ENCODE measurements at regions of chr1 and their contacts with region 1.

Region 1: GRCh38 chr1:17527036-17527914 is 12.2 kb upstream of the ARHGEF10L start:
- DNase-seq: peak; percentile 40
- H3K4me3 ChIP-seq: no peak overlapping the region
- H3K27ac ChIP-seq: peak overlapping the region; percentile 69 to 85 (median 84)
- H3K4me1 ChIP-seq: peaks cover 25 to 52% (median 39%) of the 10 kb centered on the region in 4 donors
- H3K27me3 ChIP-seq: no peaks in the 10 kb centered on the region
- CTCF ChIP-seq: no peak
- EP300 ChIP-seq: no peak
- POLR2A ChIP-seq: no peak

Region 2: DNA sequence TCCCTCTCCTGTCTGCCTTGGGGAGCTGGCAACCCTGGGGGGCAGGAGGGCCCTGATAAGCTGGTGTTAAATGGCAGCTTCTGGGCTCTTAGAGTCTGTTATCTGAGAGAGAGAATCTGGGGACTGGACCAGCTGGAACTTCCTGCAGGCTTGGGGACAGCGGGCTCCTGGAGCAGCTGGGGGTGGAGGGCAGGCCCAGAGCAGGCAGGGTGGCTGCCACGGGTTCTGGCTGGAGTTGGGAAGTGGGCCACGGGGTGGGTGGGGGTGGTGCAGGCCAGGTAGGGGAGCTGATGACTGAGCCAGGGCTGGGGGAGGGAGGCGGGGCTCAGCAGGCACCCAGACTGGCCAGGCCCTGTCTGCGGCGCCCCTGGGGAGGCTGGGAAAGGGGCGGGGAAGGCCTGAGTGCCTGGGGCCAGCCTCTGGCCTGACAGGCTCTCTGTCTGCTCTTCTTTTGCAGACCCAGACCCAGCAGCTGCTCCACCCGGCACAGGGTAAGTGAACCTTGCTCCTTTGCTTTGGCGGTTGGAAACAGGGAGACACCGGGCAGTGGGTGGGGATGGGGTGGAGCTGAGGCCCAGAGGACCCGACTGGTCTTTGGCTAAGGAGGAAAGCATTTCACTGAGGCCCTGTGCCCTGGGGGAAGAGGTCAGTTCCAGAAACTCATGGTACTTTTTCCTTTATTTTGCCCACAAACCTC is 60.9 kb after region 1 on chr1:
- in situ Hi-C with region 1: no loop called
- intact Hi-C with region 1: loop called (anchors 5 kb)
- DNase-seq: peak; percentile 91
- H3K4me3 ChIP-seq: peak overlapping the region in 1 of 4 donors; percentile 18
- H3K27ac ChIP-seq: peak overlapping the region; percentile 87 to 97 (median 91)
- H3K4me1 ChIP-seq: peaks cover 48 to 78% (median 64%) of the 10 kb centered on the region in 4 donors
- H3K27me3 ChIP-seq: no peaks in the 10 kb centered on the region
- CTCF ChIP-seq: no peak
- EP300 ChIP-seq: peak; percentile 90
- POLR2A ChIP-seq: peak; percentile 75